Panc1 (cell line): ENCODE measurements at regions of chr12 and their contacts with region 1.

Region 1: GRCh38 chr12:7460375-7461259 is 16.7 kb upstream of the CD163L1 start:
- DNase-seq: peak; percentile 42
- ATAC-seq: peak; percentile 91
- H3K4me3 ChIP-seq: no peak overlapping the region
- H3K27ac ChIP-seq: no peak overlapping the region
- H3K4me1 ChIP-seq: no peaks in the 10 kb centered on the region
- H3K27me3 ChIP-seq: no peaks in the 10 kb centered on the region
- CTCF ChIP-seq: peak; percentile 79

Region 2: DNA sequence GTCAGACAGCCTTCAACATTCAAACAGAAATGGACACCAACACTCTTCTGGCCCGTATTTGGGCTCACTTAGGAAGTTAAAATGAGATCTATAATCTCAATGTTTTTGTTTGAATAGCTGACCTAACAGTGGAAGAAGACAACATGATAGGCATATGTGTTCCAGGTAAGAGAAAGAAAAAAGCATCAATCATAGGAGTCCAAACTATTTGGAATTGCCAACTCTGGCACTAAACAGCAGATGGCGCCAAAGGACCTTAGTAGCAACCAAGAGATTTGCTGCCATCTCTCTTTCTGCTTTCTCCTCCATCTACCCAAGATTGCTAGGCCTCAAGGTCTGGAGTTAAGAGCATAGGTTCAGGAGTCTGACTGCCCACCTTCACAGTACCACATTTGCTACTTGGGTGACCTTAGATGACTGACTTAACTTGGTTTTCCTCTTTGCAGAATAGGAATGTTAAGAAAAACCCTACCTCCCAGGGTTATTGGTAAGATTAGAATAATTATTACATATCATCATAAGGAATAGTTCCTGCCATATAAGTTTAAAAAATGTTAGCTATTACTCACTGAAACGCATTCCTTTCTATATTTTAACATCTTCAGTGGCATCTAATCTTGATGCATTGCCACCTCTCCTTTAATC is 240.9 kb before region 1 on chr12:
- CTCF ChIA-PET with region 1: no interaction called
- POLR2A ChIA-PET with region 1: no interaction called
- in situ Hi-C with region 1: no loop called
- intact Hi-C with region 1: loop called (anchors 1 kb)
- DNase-seq: peak; percentile 61
- ATAC-seq: peak; percentile 81
- H3K4me3 ChIP-seq: no peak overlapping the region
- H3K27ac ChIP-seq: no peak overlapping the region
- H3K4me1 ChIP-seq: no peaks in the 10 kb centered on the region
- H3K27me3 ChIP-seq: no peaks in the 10 kb centered on the region
- CTCF ChIP-seq: peak; percentile 76

Region 3: GRCh38 chr12:7966563-7966962 is 505.9 kb after region 1 on chr12:
- CTCF ChIA-PET with region 1: no interaction called
- POLR2A ChIA-PET with region 1: no interaction called
- in situ Hi-C with region 1: no loop called
- intact Hi-C with region 1: no loop called
- DNase-seq: no peak
- ATAC-seq: no peak
- H3K4me3 ChIP-seq: no peak overlapping the region
- H3K27ac ChIP-seq: no peak overlapping the region
- H3K4me1 ChIP-seq: no peaks in the 10 kb centered on the region
- H3K27me3 ChIP-seq: no peaks in the 10 kb centered on the region
- CTCF ChIP-seq: no peak